ENCODE measurements at regions of chr12 and their contacts with region 1.

Region 1: DNA sequence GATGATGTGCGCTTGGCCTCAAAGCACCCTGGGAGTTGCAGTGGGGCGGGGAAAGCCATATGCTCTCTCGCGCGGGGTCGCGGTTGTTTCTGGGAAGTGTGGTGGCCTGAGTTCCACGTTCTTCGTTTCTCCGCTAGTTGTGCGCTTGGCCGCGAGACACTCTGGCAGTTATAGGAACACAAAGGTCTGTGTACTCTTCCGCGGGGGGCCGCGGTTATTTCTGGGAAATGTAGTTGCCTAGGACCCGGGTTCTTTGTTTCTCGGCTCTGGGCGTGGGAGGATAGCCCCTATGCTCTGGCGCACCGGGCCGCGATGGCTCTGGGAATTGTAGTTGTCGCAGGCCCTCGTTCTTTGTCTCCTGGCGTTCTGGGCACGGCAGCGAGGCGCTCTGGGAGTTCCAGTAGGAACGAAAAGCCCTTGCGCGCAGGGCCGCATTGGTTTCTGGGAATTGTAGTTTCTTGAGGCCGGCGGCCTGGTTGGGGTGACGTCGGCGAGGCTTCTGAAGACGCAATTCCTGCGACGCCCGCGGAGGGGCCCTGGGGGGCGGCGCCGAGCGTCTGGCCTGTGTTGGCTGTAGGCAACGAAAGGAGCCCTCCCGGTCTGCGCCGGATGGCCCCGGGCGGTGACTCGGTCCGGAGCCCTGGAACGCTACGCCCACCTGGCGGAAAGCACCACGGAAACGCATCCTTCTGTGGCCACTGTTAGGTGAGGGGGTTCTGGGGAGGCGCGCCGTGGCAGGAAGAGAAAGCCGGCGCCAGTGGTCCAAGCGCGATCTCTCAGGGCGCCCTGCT is at the start of gene ZNF140:
- DNase-seq: peak; percentile 94 to 100 (median 98)

Region 2: DNA sequence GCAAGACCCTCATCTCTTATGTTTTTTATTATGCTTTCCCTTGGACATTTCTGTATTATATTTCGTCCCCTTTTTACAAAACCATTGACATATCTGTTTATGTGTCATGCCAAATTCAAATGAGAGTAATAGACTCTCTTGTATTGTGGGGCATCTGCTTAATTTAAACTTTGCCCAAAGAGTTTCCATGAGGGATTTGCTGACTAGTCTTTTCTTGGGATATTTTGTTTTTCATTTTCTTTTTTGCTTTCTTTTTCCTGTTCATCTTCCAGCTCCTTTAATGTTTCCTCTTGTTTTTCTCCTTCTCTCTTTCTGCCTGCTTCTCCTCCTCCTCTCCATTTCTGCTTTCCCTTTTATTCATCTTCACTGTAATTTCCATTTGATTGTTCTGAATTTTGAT is 108.2 kb before region 1 on chr12:
- intact Hi-C with region 1: no loop called
- DNase-seq: no peak

Region 3: GRCh38 chr12:132986001-132986912 is 94.3 kb before region 1 on chr12 and contains the start of gene ZNF26:
- intact Hi-C with region 1: loop called (anchors 5 kb)
- DNase-seq: peak; percentile 86 to 98 (median 90)

Region 4: GRCh38 chr12:133037207-133038005 is 43.2 kb before region 1 on chr12 and contains the start of gene ZNF84:
- intact Hi-C with region 1: loop called (anchors 1 kb)
- DNase-seq: peak; percentile 91 to 99 (median 94)

Region 5: GRCh38 chr12:133130038-133130807 is 49.7 kb after region 1 on chr12 and contains the starts of genes ZNF10 and ZNF891:
- intact Hi-C with region 1: loop called (anchors 1 kb)
- DNase-seq: peak; percentile 91 to 99 (median 95)

Region 6: DNA sequence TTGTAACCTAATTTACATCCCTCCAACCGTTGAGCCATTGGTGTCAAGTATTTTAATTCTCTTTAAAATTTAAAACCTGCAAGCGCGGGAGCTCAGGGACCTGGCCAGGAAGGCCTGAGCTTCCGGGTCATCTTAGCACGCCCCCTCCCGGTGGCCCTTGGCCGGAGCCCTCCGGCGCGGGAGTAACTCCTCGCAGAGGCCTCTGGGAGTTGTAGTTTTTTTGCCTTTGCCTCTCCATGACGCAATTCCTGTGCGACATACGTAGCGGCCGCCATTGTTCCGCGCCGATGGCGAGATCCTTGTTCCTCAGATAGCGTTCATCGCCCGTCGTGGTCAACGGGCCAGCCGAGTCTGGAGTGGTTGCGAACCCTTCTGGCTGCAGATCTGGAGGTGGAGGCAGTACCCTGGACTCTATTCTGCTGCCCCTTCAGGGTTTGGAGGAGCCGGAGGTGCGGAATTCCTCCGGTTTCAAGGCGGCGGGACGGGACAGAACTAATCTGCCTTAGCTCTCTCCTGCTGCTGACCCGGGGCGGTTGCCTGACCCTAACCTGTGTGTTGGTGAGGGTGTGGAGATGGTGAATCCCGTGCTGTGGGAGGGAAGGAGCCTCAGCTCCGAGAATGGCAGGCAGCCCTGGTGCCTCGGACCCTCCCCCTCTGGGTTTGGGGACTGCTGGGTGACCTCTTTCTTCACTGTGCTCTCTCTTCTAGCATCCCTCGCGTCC is 100.8 kb after region 1 on chr12 and contains the start of gene ZNF268:
- intact Hi-C with region 1: loop called (anchors 1 kb)
- DNase-seq: peak; percentile 78 to 98 (median 86)

Measured in posterior cingulate gyrus (tissue), 11 donors.